ENCODE measurements at regions of chr5 and their contacts with region 1.

Region 1: DNA sequence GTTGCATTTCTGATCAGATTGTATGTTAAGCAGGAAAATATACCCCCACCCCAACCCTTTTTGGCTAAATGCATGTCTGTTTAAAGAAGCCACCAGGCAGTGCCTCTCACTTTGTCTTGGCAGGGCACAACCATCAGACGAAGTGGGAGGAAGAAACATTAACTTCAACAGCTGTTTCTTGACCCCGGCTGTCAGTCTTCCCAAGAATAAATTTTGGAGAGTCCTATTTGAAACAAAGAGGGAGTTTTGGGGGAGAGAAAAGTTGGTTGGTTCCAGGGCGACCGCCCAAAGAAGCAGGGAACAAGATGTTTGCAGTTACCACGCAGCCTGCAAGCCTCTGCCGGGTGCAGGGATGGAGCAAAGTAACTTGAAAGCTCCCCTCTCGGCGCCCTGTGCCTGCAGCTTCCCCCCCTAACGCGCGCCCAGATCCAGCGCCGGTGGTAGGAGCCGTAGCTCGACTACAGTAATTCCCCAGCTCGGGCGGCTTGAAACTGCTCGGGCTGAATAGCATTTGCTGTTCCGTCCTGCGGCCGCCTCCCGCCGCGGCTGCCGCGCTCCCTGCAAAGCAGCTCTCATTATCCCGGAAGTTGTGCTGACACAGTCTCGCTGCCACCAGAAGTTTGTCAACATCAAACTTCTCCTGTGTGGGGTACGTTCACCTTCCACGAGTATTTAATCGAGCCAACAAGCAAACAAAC is 100.7 kb upstream of the SSBP2 start:
- DNase-seq: peak; percentile 94 to 97 (median 96)
- H3K4me3 ChIP-seq: peak overlapping the region in 6 of 7 experiments; percentile 59 to 80 (median 64)
- H3K27ac ChIP-seq: peak overlapping the region; percentile 46 to 86
- H3K4me1 ChIP-seq: peaks cover 26 to 70% (median 53%) of the 10 kb centered on the region in 4 experiments
- H3K27me3 ChIP-seq: no peaks in the 10 kb centered on the region

Region 2: DNA sequence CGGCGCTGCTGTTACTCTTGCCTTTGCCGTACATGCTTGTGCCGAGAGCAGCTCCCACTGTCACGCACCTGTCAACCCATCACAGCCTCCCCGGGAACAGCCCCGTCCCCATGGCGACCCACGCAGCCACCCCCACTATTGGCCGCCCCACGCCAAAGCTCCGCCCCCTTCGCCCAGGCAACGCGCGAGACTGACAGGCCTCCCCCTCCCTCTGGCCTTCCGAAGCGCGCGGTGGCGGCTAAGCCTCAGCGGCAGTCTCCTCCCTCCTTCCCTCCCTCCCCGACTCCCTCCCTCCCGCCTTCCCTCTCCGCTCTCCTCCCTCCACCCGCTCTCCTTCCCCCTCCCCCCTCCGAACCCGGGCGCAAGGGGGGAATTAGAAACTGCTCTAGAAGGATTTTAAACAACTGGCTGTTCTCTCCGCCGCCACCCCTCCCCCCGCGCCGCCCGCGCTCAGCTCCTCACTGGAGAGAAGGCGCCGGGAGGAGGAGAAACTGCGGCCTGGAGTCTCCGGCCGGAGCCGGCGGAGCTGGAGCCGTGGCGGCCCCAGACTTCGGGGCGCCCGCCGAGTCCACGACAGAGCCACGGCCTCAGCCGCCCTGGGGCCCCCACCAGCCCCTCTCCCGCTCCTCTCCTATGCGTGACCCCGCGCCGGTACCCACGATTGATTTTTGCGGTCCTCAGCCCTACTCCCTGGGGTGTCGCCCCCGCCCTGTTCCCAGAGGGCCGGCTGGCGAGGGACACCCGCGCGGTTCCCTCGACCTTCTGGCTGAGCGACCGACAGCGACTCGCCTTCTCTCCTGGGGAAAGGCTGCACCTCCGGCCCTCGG is 100.4 kb before region 1 on chr5 and contains the start of gene SSBP2:
- CTCF ChIA-PET with region 1: interaction called, 56 read pairs
- POLR2A ChIA-PET with region 1: interaction called, 52 read pairs
- DNase-seq: peak; percentile 100
- H3K4me3 ChIP-seq: peak within 1 kb of the TSS; percentile 69 to 94 (median 87)
- H3K27ac ChIP-seq: peak within 1 kb of the TSS; percentile 90 to 96
- H3K4me1 ChIP-seq: peaks cover 18 to 36% (median 28%) of the 10 kb centered on the region in 4 experiments
- H3K27me3 ChIP-seq: no peaks in the 10 kb centered on the region

Region 3: GRCh38 chr5:81787474-81788242 is 64.0 kb before region 1 on chr5:
- CTCF ChIA-PET with region 1: interaction called, 11 read pairs
- POLR2A ChIA-PET with region 1: no interaction called
- DNase-seq: peak in 2 of 3 donors; percentile 75 to 76
- H3K4me3 ChIP-seq: peak overlapping the region in 1 of 7 experiments; percentile 43
- H3K27ac ChIP-seq: no peak overlapping the region
- H3K4me1 ChIP-seq: peaks cover 6 to 31% (median 27%) of the 10 kb centered on the region in 4 experiments
- H3K27me3 ChIP-seq: no peaks in the 10 kb centered on the region

Measured in common myeloid progenitor, CD34-positive (primary cell).